OCI-LY7 (cell line): ENCODE measurements at regions of chr4 and their contacts with region 1.

Region 1: GRCh38 chr4:158578476-158578875 is 56.8 kb downstream of the RXFP1 start:
- DNase-seq: peak; percentile 4
- H3K4me3 ChIP-seq: no peak overlapping the region
- H3K27ac ChIP-seq: no peak overlapping the region
- H3K4me1 ChIP-seq: no peaks in the 10 kb centered on the region
- CTCF ChIP-seq: peak; percentile 54

Region 2: GRCh38 chr4:158566860-158567259 is 11.6 kb before region 1 on chr4:
- CTCF ChIA-PET with region 1: no interaction called
- POLR2A ChIA-PET with region 1: interaction called, 14 read pairs
- intact Hi-C with region 1: no loop called
- DNase-seq: no peak
- H3K4me3 ChIP-seq: no peak overlapping the region
- H3K27ac ChIP-seq: no peak overlapping the region
- H3K4me1 ChIP-seq: no peaks in the 10 kb centered on the region
- CTCF ChIP-seq: no peak

Region 3: GRCh38 chr4:159051245-159052071 is 473.0 kb after region 1 on chr4:
- CTCF ChIA-PET with region 1: no interaction called
- POLR2A ChIA-PET with region 1: no interaction called
- intact Hi-C with region 1: no loop called
- DNase-seq: no peak
- H3K4me3 ChIP-seq: peak overlapping the region; percentile 22
- H3K27ac ChIP-seq: no peak overlapping the region
- H3K4me1 ChIP-seq: peaks cover 21% of the 10 kb centered on the region
- CTCF ChIP-seq: no peak